ENCODE measurements at regions of chr7 and their contacts with region 1.

Region 1: GRCh38 chr7:142345811-142346210 is 88.0 kb upstream of the PRSS58 start:
- DNase-seq: no peak
- H3K4me3 ChIP-seq: no peak overlapping the region
- H3K27ac ChIP-seq: no peak overlapping the region
- H3K4me1 ChIP-seq: no peaks in the 10 kb centered on the region
- H3K27me3 ChIP-seq: no peaks in the 10 kb centered on the region
- CTCF ChIP-seq: no peak
- EP300 ChIP-seq: no peak
- POLR2A ChIP-seq: no peak
- RAD21 ChIP-seq: no peak

Region 2: GRCh38 chr7:142313528-142313927 is 32.3 kb before region 1 on chr7:
- CTCF ChIA-PET with region 1: interaction called, 10 read pairs
- POLR2A ChIA-PET with region 1: no interaction called
- DNase-seq: no peak
- H3K4me3 ChIP-seq: no peak overlapping the region
- H3K27ac ChIP-seq: no peak overlapping the region
- H3K4me1 ChIP-seq: no peaks in the 10 kb centered on the region
- H3K27me3 ChIP-seq: peaks cover 0 to 1% (median 0%) of the 10 kb centered on the region in 4 experiments; a peak in 1 of 7 replicates
- CTCF ChIP-seq: no peak
- EP300 ChIP-seq: no peak
- POLR2A ChIP-seq: no peak
- RAD21 ChIP-seq: no peak

Region 3: GRCh38 chr7:142357953-142358520 is 12.2 kb after region 1 on chr7:
- CTCF ChIA-PET with region 1: interaction called, 45 read pairs
- POLR2A ChIA-PET with region 1: interaction called, 3 read pairs
- DNase-seq: peak in 1 of 2 experiments; percentile 56
- H3K4me3 ChIP-seq: no peak overlapping the region
- H3K27ac ChIP-seq: no peak overlapping the region
- H3K4me1 ChIP-seq: peaks cover 5 to 13% (median 9%) of the 10 kb centered on the region in 4 experiments; a peak in 5 of 7 replicates
- H3K27me3 ChIP-seq: no peaks in the 10 kb centered on the region
- CTCF ChIP-seq: peak; percentile 32 to 86 (median 86)
- EP300 ChIP-seq: no peak
- POLR2A ChIP-seq: no peak
- RAD21 ChIP-seq: peak; percentile 78 to 88

Measured in H1 (cell line).